Gastrocnemius medialis (tissue), 4 donors: ENCODE measurements at regions of chr15 and their contacts with region 1.

Region 1: DNA sequence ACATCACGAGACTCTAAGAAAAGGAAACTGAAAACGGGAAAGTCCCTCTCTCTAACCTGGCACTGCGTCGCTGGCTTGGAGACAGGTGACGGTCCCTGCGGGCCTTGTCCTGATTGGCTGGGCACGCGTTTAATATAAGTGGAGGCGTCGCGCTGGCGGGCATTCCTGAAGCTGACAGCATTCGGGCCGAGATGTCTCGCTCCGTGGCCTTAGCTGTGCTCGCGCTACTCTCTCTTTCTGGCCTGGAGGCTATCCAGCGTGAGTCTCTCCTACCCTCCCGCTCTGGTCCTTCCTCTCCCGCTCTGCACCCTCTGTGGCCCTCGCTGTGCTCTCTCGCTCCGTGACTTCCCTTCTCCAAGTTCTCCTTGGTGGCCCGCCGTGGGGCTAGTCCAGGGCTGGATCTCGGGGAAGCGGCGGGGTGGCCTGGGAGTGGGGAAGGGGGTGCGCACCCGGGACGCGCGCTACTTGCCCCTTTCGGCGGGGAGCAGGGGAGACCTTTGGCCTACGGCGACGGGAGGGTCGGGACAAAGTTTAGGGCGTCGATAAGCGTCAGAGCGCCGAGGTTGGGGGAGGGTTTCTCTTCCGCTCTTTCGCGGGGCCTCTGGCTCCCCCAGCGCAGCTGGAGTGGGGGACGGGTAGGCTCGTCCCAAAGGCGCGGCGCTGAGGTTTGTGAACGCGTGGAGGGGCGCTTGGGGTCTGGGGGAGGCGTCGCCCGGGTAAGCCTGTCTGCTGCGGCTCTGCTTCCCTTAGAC is at the start of gene B2M:
- DNase-seq: peak; percentile 92 to 97
- ATAC-seq: peak; percentile 93 to 95
- H3K4me3 ChIP-seq: peak within 1 kb of the TSS; percentile 91 to 97 (median 94)
- H3K27ac ChIP-seq: peak within 1 kb of the TSS; percentile 96 to 99 (median 98)
- H3K4me1 ChIP-seq: peaks cover 21 to 28% of the 10 kb centered on the region in 2 donors
- H3K27me3 ChIP-seq: no peaks in the 10 kb centered on the region
- CTCF ChIP-seq: no peak
- POLR2A ChIP-seq: peak; percentile 98 to 99
- total RNA-seq, gene B2M: 787 to 1,106 (median 928) TPM

Region 2: GRCh38 chr15:43791993-43792760 is 919.4 kb before region 1 on chr15 and contains the start of gene SERF2:
- in situ Hi-C with region 1: loop called in 1 of 4 experiments (anchors 25 kb)
- intact Hi-C with region 1: no loop called
- DNase-seq: peak; percentile 100
- ATAC-seq: peak; percentile 83 to 91
- H3K4me3 ChIP-seq: peak within 1 kb of the TSS; percentile 91 to 100 (median 94)
- H3K27ac ChIP-seq: peak within 1 kb of the TSS; percentile 96 to 100 (median 99)
- H3K4me1 ChIP-seq: peaks cover 40 to 46% of the 10 kb centered on the region in 2 donors
- H3K27me3 ChIP-seq: no peaks in the 10 kb centered on the region
- CTCF ChIP-seq: no peak
- POLR2A ChIP-seq: peak; percentile 99
- total RNA-seq, gene SERF2: 491 to 646 (median 617) TPM

Region 3: DNA sequence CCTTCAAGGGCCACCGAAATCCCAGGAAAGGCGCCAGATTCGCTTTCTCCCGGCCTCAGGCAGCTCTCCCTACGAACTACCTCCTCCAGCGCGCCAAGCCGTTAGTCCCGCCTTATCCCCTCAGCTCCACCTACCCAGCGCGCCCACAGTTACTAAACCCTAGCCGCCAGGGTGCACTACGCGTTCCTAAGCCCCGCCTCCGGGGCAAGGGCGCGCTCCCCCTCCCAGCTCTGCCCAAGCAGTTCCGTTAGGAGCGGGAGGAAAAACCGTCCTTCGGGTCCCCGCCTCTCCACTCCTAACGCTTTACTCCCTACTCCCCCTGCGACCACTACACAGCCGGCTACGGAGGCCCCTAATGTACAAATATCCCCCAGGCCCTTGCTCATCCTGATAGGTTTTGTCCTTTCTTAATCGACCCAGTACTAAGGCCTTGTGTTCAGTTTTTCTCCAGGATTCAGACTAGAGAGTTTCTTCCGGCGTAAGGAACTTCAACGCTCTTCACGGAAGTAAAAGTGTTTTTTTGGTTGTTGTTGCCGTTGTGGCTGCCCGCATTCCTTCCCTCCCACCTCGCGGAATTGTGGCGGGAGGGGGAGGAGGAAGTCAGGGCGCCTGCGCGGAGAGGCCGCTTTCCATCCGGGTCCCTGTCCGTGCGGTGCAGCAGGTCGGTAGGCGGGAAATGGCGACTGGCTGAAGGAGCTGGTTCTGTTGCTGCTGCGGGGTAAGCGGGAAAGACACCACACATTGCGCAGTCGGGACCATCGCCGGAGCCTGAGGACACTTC is 284.4 kb before region 1 on chr15 and contains the start of gene CTDSPL2:
- in situ Hi-C with region 1: no loop called
- intact Hi-C with region 1: loop called (anchors 5 kb)
- DNase-seq: peak; percentile 98 to 99
- ATAC-seq: peak; percentile 90 to 95
- H3K4me3 ChIP-seq: peak within 1 kb of the TSS; percentile 91 to 96 (median 94)
- H3K27ac ChIP-seq: peak within 1 kb of the TSS; percentile 93 to 99 (median 94)
- H3K4me1 ChIP-seq: peaks cover 19 to 28% of the 10 kb centered on the region in 2 donors
- H3K27me3 ChIP-seq: no peaks in the 10 kb centered on the region
- CTCF ChIP-seq: peak in 3 of 5 experiments; percentile 24 to 43 (median 28)
- POLR2A ChIP-seq: peak; percentile 36 to 54
- total RNA-seq, gene CTDSPL2: 18.3 to 26.1 (median 24.5) TPM

Region 4: GRCh38 chr15:44663409-44664308 is 47.9 kb before region 1 on chr15 and contains the start of gene SPG11:
- in situ Hi-C with region 1: loop called in 1 of 4 experiments (anchors 5 kb)
- intact Hi-C with region 1: loop called (anchors 1 kb)
- DNase-seq: peak; percentile 95 to 98
- ATAC-seq: peak; percentile 96 to 97
- H3K4me3 ChIP-seq: peak within 1 kb of the TSS; percentile 94 to 98 (median 96)
- H3K27ac ChIP-seq: peak within 1 kb of the TSS; percentile 95 to 99 (median 98)
- H3K4me1 ChIP-seq: peaks cover 21 to 25% of the 10 kb centered on the region in 2 donors
- H3K27me3 ChIP-seq: no peaks in the 10 kb centered on the region
- CTCF ChIP-seq: peak; percentile 93 to 98 (median 96)
- POLR2A ChIP-seq: peak; percentile 92 to 96
- total RNA-seq, gene SPG11: 32.8 to 51.7 (median 43.2) TPM

Region 5: DNA sequence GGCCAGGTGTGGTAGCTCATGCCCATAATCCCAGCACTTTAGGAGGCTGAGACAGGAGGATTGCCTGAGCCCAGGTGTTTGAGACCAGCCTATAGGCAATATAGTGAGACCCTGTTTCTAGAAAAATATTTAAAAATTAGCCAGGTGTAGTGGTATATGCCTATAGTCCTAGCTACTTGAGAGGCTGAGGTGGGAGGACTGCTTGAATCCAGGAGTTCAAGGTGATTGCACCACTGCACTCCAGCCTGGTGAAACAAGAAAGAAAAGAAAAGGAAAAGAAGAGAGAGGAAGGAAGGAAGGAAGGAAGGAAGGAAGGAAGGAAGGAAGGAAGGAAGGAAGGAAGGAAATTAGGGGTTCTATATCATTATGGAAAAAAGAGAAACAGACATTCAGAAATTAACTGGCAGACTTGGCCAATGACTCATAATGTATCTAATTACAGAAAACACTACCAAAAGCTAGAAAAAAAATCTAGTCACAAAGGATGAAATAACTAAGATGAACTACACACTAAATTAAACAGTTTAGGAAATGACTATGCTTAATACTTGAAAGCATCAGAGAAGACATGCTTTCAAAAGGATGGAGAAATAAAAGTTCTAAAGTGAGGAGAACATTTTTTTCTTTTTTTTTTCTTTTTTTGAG is 199.6 kb after region 1 on chr15:
- in situ Hi-C with region 1: no loop called
- intact Hi-C with region 1: no loop called
- DNase-seq: no peak
- ATAC-seq: no peak
- H3K4me3 ChIP-seq: no peak overlapping the region
- H3K27ac ChIP-seq: no peak overlapping the region
- H3K4me1 ChIP-seq: no peaks in the 10 kb centered on the region
- H3K27me3 ChIP-seq: no peaks in the 10 kb centered on the region
- CTCF ChIP-seq: no peak
- POLR2A ChIP-seq: no peak

Region 6: GRCh38 chr15:44956388-44956787 is 244.9 kb after region 1 on chr15 and contains the start of gene TERB2:
- in situ Hi-C with region 1: no loop called
- intact Hi-C with region 1: no loop called
- DNase-seq: no peak
- ATAC-seq: no peak
- H3K4me3 ChIP-seq: no peak within 1 kb of the TSS
- H3K27ac ChIP-seq: no peak within 1 kb of the TSS
- H3K4me1 ChIP-seq: no peaks in the 10 kb centered on the region
- H3K27me3 ChIP-seq: no peaks in the 10 kb centered on the region
- CTCF ChIP-seq: no peak
- POLR2A ChIP-seq: no peak
- total RNA-seq, gene TERB2: not detected

Region 7: DNA sequence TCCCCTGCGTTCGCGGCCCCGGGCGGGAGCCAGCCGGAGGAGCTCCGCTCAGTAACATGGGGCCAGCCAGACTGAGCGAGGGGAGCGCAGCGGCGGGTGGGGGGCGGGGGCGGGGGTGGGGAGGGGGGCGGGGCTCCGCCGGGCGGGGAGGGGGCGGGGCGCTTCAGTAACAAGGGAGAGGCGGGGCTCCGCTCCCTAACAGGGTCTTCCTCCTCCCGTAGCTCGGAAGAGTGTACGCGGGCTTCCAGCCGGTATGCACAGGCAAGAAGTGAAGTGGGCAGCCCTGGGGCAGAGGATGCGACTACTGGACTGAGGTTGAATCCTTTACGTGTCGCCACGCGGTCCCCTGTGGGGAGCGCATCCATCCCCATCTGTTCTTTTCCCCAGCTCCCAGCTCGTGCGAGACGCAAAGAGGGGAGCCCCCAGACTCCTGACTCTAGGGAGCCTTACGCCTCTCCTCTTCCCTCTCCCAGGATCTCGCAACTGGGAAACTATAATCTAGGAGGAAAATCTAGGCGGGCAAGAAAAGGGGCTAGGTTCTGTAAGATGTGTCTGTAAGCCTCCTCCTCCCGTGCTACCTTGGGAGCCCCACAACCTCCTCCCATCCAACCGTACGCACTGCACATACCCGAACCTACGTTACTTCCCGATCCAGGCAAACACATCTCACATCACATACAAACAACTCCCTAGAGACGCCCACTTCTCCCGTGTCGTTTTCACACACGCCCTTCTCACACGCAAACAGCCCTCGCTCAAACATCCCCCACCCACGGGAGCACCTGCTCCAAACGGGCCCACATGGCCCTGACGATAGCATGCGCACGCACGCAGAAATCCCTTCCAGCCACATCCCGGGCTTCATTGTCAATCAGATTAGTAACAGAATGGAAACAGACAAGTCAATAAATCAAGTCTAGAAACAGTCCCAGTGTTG is 476.6 kb after region 1 on chr15 and contains the start of gene SHF:
- in situ Hi-C with region 1: no loop called
- intact Hi-C with region 1: loop called (anchors 10 kb)
- DNase-seq: no peak
- ATAC-seq: peak; percentile 43 to 61
- H3K4me3 ChIP-seq: peak within 1 kb of the TSS; percentile 63 to 76 (median 70)
- H3K27ac ChIP-seq: peak within 1 kb of the TSS; percentile 52 to 72 (median 70)
- H3K4me1 ChIP-seq: peaks cover 11 to 14% of the 10 kb centered on the region in 2 donors
- H3K27me3 ChIP-seq: no peaks in the 10 kb centered on the region
- CTCF ChIP-seq: no peak
- POLR2A ChIP-seq: peak; percentile 7 to 28
- total RNA-seq, gene SHF: 0.80 to 3.3 (median 1.7) TPM